Mammary epithelial cell (primary cell): ENCODE measurements at regions of chr7 and their contacts with region 1.

Region 1: GRCh38 chr7:7114706-7115295 is 67.5 kb upstream of the C1GALT1 start:
- DNase-seq: no peak
- H3K4me3 ChIP-seq: no peak overlapping the region
- H3K27ac ChIP-seq: no peak overlapping the region
- H3K4me1 ChIP-seq: no peaks in the 10 kb centered on the region
- H3K27me3 ChIP-seq: no peaks in the 10 kb centered on the region
- CTCF ChIP-seq: no peak

Region 2: DNA sequence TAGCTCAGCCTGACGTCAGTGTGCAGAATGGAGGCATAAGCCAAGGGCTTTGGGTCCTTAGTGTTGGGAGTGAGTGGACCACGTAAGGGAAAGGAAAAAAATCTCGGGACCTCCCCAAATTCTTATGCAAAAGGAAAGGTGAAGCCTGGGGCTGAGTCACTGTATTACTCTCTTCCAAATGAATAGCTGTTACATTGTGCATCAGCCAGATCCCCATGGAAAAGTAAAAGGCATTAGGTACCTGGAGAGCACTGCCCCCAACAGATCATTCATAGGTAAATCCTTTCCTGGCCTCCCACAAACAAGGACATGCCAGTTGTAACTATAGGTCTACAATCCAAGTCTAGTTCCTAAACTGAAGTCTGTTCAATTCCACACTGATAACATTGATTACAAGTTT is 238.0 kb after region 1 on chr7:
- CTCF ChIA-PET with region 1: no interaction called
- dilution Hi-C with region 1: no loop called
- in situ Hi-C with region 1: loop called in 1 of 2 experiments (anchors 10 kb)
- intact Hi-C with region 1: no loop called
- DNase-seq: peak; percentile 78
- H3K4me3 ChIP-seq: no peak overlapping the region
- H3K27ac ChIP-seq: no peak overlapping the region
- H3K4me1 ChIP-seq: peaks cover 7% of the 10 kb centered on the region
- H3K27me3 ChIP-seq: no peaks in the 10 kb centered on the region
- CTCF ChIP-seq: peak; percentile 46 to 73